ENCODE measurements at regions of chr11 and their contacts with region 1.

Region 1: DNA sequence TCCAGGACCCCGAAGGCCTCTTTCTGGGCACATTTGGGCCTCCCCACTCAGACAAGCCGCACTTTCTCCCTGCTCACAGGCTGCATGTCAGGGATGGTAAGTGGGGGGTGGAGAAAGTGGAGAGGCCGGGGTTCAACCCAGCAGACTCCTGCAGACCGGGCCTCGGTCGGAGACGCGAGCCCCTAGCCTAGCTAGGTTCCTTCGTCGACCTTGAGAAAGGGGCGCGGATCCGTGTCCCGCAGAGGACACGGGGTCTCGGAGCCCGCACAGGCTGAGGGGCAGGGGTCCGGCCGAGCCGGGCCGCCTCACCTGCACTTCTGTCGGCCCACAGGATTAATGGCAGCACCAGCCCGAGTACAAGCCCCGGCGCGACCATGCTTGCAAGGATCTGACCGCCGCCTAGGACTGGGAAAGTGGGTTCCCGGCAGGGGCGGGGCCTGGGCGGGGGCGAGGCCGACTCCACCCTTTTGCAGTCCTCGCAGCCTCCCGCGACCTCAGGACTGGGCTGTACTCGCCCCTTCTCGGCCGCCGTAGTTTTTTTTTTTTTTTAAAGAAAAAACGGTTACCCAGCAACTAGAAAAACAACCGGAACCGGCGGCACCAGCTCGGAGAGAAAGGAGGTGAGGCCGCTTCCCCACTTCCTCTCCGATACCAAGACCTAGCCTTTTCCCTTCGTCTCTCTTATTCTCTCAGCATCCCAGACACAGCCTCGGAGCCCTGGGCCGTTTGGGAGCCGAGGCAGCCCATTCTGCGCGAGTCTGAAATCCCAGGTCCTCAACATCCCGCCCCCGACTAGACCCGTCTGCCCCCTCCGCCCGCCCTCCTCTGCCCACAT is at the starts of genes SIAE and SPA17:
- DNase-seq: peak; percentile 65 to 94 (median 84)
- ATAC-seq: peak; percentile 77
- H3K4me3 ChIP-seq: peak within 1 kb of the TSS; percentile 69 to 82
- H3K4me3 Mint-ChIP-seq: peak within 1 kb of the TSS; percentile 89
- H3K27ac ChIP-seq: peak within 1 kb of the TSS; percentile 77 to 80
- H3K27ac Mint-ChIP-seq: peak within 1 kb of the TSS; percentile 96
- H3K4me1 ChIP-seq: peaks cover 43% of the 10 kb centered on the region
- H3K4me1 Mint-ChIP-seq: peaks cover 31% of the 10 kb centered on the region
- H3K27me3 ChIP-seq: no peaks in the 10 kb centered on the region
- H3K27me3 Mint-ChIP-seq: no peaks in the 10 kb centered on the region
- CTCF ChIP-seq: no peak
- total RNA-seq, gene SIAE: 2.4 to 3.2 TPM
- total RNA-seq, gene SPA17: 0.22 to 0.68 TPM

Region 2: GRCh38 chr11:124639186-124639585 is 34.4 kb before region 1 on chr11:
- CTCF ChIA-PET with region 1: interaction called, 11 read pairs
- POLR2A ChIA-PET with region 1: no interaction called
- intact Hi-C with region 1: no loop called
- DNase-seq: no peak
- ATAC-seq: no peak
- H3K4me3 ChIP-seq: no peak overlapping the region
- H3K4me3 Mint-ChIP-seq: no peak overlapping the region
- H3K27ac ChIP-seq: no peak overlapping the region
- H3K27ac Mint-ChIP-seq: no peak overlapping the region
- H3K4me1 ChIP-seq: no peaks in the 10 kb centered on the region
- H3K4me1 Mint-ChIP-seq: no peaks in the 10 kb centered on the region
- H3K27me3 ChIP-seq: no peaks in the 10 kb centered on the region
- H3K27me3 Mint-ChIP-seq: no peaks in the 10 kb centered on the region
- CTCF ChIP-seq: no peak

Region 3: DNA sequence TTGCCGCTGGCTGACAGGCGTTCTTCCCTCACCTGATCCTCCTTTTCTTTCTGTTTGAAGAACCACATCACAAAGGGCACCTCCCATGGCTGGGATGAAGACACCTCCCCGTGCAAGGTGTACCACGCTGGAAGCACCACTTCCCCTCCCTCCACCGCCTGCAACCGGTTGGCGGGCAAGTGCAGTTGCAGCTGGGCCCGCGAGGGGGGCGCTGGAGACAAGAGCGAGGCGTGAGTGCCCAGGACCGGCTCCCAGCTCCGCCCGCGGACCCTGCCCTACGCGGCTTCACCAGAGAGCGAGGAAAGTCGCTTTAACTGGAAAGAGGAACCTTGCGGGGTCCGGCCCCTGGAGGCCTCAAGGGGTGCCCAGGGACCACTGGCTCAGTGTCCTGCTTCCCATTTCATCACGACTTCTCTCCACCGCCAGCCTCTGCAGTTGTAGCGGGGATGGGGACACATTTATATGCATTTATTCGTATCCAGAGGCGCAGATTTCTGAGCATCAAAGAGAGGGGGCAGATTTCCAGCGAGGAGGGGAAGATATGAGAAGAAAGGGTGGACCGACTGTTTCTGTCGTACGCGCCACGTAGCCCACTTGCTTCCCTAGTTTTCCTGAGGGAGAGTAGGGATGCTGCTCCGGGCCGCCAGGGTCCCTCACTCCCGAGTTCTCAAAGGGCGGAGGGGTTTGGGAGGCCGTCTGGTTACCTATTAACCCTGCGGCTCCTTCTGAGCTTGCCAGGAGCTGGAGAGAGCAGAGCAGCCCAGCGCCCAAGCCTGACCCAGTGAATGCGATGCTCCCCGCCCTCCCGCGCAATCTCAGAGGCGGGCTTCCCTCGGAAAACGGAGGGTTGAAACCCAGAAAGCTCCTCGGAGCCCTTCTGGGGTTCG is 85.0 kb after region 1 on chr11:
- CTCF ChIA-PET with region 1: interaction called, 174 read pairs
- POLR2A ChIA-PET with region 1: interaction called, 10 read pairs
- intact Hi-C with region 1: loop called (anchors 1 kb)
- DNase-seq: peak; percentile 42 to 78 (median 70)
- ATAC-seq: peak; percentile 72
- H3K4me3 ChIP-seq: peak overlapping the region; percentile 6 to 16
- H3K4me3 Mint-ChIP-seq: peak overlapping the region; percentile 58
- H3K27ac ChIP-seq: no peak overlapping the region
- H3K27ac Mint-ChIP-seq: no peak overlapping the region
- H3K4me1 ChIP-seq: peaks cover 34% of the 10 kb centered on the region
- H3K4me1 Mint-ChIP-seq: peaks cover 33% of the 10 kb centered on the region
- H3K27me3 ChIP-seq: peaks cover 32 to 39% of the 10 kb centered on the region in 2 experiments
- H3K27me3 Mint-ChIP-seq: peaks cover 40% of the 10 kb centered on the region
- CTCF ChIP-seq: peak; percentile 81

Region 4: GRCh38 chr11:124800226-124800929 is 126.8 kb after region 1 on chr11 and contains the start of gene MSANTD2:
- CTCF ChIA-PET with region 1: interaction called, 38 read pairs
- POLR2A ChIA-PET with region 1: interaction called, 4 read pairs
- intact Hi-C with region 1: loop called in 1 of 2 experiments (anchors 1 kb)
- DNase-seq: peak; percentile 57 to 88 (median 80)
- ATAC-seq: peak; percentile 76
- H3K4me3 ChIP-seq: peak within 1 kb of the TSS; percentile 72 to 84
- H3K4me3 Mint-ChIP-seq: peak within 1 kb of the TSS; percentile 96
- H3K27ac ChIP-seq: peak within 1 kb of the TSS; percentile 91 to 98
- H3K27ac Mint-ChIP-seq: peak within 1 kb of the TSS; percentile 96
- H3K4me1 ChIP-seq: peaks cover 17% of the 10 kb centered on the region
- H3K4me1 Mint-ChIP-seq: peaks cover 32% of the 10 kb centered on the region
- H3K27me3 ChIP-seq: no peaks in the 10 kb centered on the region
- H3K27me3 Mint-ChIP-seq: no peaks in the 10 kb centered on the region
- CTCF ChIP-seq: no peak
- total RNA-seq, gene MSANTD2: 4.3 to 4.5 TPM

Region 5: DNA sequence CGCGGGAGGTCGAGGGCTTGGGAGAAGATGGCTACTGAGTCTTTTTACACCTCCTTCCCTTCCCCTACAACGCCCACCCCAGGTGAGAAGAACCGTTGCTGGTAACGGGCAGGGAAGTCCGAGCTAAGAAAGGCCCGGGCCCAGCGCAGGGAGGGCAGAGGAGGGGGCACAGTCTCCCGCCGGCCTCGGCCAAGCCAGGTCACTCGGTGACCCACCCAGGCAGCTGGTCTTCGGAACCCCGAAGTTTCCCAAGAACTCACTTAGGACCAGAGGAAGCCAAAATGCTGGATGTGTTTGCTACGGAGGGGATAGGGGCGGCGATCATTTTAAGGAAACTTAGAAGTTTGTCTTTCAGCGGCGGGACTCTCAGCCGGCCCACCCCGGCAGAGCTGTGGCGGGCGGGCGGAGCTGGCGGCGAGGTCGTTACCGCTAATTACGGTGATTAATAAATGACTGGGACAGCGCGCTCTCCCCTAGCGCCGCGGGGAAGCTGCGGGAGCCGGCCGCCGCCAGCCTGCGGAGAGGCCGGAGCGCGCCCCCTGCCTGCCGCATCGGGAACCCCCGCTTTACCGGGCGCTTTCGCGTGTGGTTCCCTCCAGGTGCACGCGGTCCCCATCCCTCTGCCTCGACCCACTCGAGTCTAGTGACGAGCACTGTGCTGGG is 192.5 kb after region 1 on chr11:
- CTCF ChIA-PET with region 1: interaction called, 6 read pairs
- POLR2A ChIA-PET with region 1: no interaction called
- intact Hi-C with region 1: loop called in 1 of 2 experiments (anchors 2 kb)
- DNase-seq: peak in 8 of 9 experiments; percentile 26 to 67 (median 54)
- ATAC-seq: peak; percentile 66
- H3K4me3 ChIP-seq: peak overlapping the region; percentile 8 to 33
- H3K4me3 Mint-ChIP-seq: peak overlapping the region; percentile 12
- H3K27ac ChIP-seq: no peak overlapping the region
- H3K27ac Mint-ChIP-seq: no peak overlapping the region
- H3K4me1 ChIP-seq: peaks cover 47% of the 10 kb centered on the region
- H3K4me1 Mint-ChIP-seq: peaks cover 43% of the 10 kb centered on the region
- H3K27me3 ChIP-seq: peaks cover 56 to 62% of the 10 kb centered on the region in 2 experiments
- H3K27me3 Mint-ChIP-seq: peaks cover 86% of the 10 kb centered on the region
- CTCF ChIP-seq: peak; percentile 72

Region 6: DNA sequence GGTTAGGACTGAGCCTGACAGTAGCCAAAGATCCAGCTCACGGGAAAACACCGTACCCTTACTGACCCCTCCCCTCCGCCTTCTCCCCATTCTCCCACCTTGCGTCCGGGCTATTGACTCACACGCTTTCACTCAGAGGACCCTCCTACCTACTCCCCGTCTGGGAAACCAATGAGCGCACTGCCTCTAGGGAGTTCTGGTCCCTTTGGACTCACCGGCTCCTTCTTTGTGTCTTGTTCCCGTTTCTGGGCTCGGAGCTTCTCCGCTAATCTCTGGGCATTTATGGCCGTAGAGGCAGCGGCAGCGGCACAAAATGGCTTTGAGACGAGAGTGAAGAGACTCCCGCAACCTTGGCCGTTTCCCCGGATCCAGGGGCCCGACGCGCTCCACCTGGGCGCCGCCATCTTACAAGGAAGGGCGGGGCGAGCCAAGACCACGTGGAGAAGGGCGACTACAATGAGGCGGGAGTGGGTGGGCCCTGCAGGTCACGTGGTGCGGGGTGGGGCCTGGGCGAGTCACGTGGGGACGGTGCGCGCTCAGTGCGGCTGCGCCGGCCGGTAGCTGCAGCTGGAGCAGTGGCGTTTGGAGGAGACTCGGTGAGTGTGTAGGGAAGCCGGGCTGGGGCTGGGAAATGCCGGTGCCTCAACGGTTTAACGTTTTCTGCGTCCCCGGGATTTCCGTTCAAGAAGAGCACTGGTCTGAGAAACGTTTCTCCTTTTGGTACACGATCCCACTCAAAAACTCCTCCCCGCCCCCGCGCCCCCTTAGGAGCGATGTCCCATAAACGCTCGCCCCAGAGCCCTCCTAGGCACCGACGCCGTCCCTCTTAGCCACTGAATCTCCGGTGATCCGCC is 1537.9 kb after region 1 on chr11 and contains the starts of genes FAM118B and RPUSD4:
- CTCF ChIA-PET with region 1: no interaction called
- POLR2A ChIA-PET with region 1: no interaction called
- intact Hi-C with region 1: loop called in 1 of 2 experiments (anchors 5 kb)
- DNase-seq: peak; percentile 98 to 99 (median 98)
- ATAC-seq: peak; percentile 95
- H3K4me3 ChIP-seq: peak within 1 kb of the TSS; percentile 95 to 98
- H3K4me3 Mint-ChIP-seq: peak within 1 kb of the TSS; percentile 99
- H3K27ac ChIP-seq: peak within 1 kb of the TSS; percentile 71 to 80
- H3K27ac Mint-ChIP-seq: peak within 1 kb of the TSS; percentile 95
- H3K4me1 ChIP-seq: peaks cover 18% of the 10 kb centered on the region
- H3K4me1 Mint-ChIP-seq: peaks cover 40% of the 10 kb centered on the region
- H3K27me3 ChIP-seq: no peaks in the 10 kb centered on the region
- H3K27me3 Mint-ChIP-seq: no peaks in the 10 kb centered on the region
- CTCF ChIP-seq: no peak
- total RNA-seq, gene FAM118B: 0.64 to 0.79 TPM
- total RNA-seq, gene RPUSD4: 42.3 to 43.8 TPM

Measured in CD8-positive, alpha-beta T cell (primary cell).